ENCODE measurements at regions of chr10 and their contacts with region 1.

Region 1: GRCh38 chr10:49518982-49519578 is 19.8 kb downstream of the ERCC6 start:
- DNase-seq: peak in 1 of 5 donors; percentile 13
- ATAC-seq: peak; percentile 52 to 73 (median 62)
- H3K4me3 ChIP-seq: no peak overlapping the region
- H3K27ac ChIP-seq: no peak overlapping the region
- H3K4me1 ChIP-seq: peaks cover 0 to 33% (median 7%) of the 10 kb centered on the region in 12 donors
- H3K27me3 ChIP-seq: no peaks in the 10 kb centered on the region
- CTCF ChIP-seq: peak; percentile 55 to 74 (median 66)
- POLR2A ChIP-seq: no peak

Region 2: DNA sequence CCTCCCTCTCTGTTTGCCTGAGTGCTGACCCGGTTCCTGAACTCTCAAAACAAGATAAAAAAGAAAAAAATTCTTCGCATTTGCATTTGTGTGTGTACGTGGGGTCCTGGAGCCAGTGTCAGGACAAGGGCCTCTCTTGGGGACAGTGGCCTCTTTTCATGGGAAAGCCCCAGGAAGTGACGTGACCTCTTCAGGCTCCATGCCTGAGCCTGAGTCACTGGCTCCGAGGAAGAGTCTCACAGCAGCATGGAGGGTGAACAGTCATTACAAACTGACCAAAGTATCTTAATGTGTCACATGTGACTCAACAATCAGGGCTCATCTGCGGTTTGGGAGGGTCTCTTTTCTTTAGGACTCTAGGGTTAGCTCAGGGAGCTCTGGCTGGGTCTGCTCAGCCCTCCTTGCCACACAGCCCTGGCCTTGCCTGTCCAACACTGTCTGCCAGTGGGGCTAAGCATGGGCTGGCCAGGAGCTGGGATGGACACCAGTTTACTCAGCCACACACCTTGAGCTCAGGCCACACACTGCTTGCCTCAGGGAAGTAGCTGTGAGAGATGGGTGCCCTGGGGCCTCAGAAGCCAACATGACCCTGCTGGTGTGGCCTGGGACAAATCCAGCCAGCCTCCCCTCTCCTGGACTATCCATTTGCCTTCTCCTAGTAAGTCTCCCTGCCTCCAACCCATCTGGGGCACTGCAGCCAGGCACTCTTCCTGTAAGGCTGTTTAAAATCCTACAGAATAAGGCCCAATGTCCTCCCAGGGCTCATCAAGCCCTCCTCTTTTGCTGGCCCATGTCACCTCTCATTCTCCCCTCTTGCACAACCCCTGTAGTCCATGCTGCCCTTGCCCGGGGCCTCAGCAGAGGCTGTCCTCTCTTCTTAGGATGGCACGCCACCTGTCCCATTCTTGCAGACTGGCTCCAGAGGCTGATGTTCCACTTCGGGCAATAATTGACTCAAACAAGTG is 341.4 kb before region 1 on chr10:
- intact Hi-C with region 1: loop called in 1 of 10 experiments (anchors 10 kb)
- DNase-seq: peak; percentile 73 to 86 (median 84)
- ATAC-seq: peak; percentile 89 to 97 (median 92)
- H3K4me3 ChIP-seq: no peak overlapping the region
- H3K27ac ChIP-seq: peak overlapping the region; percentile 53 to 90 (median 81)
- H3K4me1 ChIP-seq: peaks cover 0 to 94% (median 33%) of the 10 kb centered on the region in 12 donors
- H3K27me3 ChIP-seq: no peaks in the 10 kb centered on the region
- CTCF ChIP-seq: no peak
- POLR2A ChIP-seq: no peak

Region 3: DNA sequence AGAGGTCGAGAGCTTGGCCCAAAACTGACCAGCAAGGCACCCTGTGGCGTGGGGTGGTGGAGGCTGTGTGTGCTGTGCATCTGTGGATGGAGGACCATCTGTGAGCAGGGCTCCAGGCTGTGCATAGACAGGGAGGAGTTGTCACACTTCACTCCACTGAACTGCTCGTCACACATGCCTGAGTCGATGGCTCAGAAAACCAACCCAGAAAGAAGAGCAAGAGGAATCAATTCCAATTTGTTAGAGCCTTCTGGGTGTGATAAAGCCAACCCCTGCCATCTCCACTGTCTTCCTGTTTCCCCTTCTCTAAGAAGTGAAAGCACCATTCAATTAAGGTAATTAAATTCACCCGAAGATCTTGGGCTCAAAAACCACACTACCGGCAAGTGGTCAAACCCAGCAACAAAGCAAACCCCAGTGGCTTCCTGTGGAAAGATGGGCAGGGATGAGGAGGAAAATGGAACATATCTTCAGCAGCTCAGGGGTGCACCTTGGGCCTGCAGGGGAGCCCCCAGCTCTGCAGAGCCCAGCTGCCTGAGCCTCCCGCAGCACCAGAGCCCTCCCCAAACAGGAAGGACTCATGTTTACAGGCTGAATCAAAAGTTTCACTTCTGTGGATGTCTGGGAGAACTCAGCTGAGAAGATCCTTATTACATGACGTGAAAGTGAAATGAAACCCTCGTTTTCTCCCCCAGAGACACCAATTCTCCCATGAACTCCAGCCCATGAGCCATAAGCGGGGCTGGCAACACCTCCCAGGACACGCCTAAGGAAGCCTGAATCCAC is 209.3 kb before region 1 on chr10:
- intact Hi-C with region 1: loop called in 1 of 10 experiments (anchors 10 kb)
- DNase-seq: no peak
- ATAC-seq: no peak
- H3K4me3 ChIP-seq: no peak overlapping the region
- H3K27ac ChIP-seq: peak overlapping the region in 2 of 12 donors; percentile 32 to 81
- H3K4me1 ChIP-seq: peaks cover 0 to 68% (median 29%) of the 10 kb centered on the region in 12 donors
- H3K27me3 ChIP-seq: no peaks in the 10 kb centered on the region
- CTCF ChIP-seq: no peak
- POLR2A ChIP-seq: no peak